GM18951 (cell line): ENCODE measurements at regions of chr12 and their contacts with region 1.

Region 1: DNA sequence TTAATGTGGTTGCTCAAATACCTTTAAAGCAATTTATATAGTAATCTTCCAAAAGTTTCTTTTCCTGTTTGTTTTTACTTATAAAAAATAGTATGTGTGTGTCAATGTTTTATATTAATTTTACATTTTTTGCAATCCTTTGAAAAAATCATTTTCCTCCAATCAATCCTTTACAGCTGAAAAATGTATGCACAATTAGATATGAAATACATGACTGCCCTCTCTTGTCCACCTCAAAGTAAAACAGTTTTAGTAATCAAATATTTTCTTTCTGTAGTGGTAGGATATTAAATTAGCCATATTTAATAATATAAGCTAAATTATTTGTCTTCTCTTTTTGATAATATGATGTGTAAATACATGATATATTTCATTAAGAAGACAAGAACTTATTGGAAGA is 269.9 kb downstream of the ADAMTS20 start:
- POLR2A ChIP-seq: no peak

Region 2: GRCh38 chr12:42469355-42470175 is 812.5 kb before region 1 on chr12:
- in situ Hi-C with region 1: loop called (anchors 25 kb)
- POLR2A ChIP-seq: peak; percentile 36

Region 3: DNA sequence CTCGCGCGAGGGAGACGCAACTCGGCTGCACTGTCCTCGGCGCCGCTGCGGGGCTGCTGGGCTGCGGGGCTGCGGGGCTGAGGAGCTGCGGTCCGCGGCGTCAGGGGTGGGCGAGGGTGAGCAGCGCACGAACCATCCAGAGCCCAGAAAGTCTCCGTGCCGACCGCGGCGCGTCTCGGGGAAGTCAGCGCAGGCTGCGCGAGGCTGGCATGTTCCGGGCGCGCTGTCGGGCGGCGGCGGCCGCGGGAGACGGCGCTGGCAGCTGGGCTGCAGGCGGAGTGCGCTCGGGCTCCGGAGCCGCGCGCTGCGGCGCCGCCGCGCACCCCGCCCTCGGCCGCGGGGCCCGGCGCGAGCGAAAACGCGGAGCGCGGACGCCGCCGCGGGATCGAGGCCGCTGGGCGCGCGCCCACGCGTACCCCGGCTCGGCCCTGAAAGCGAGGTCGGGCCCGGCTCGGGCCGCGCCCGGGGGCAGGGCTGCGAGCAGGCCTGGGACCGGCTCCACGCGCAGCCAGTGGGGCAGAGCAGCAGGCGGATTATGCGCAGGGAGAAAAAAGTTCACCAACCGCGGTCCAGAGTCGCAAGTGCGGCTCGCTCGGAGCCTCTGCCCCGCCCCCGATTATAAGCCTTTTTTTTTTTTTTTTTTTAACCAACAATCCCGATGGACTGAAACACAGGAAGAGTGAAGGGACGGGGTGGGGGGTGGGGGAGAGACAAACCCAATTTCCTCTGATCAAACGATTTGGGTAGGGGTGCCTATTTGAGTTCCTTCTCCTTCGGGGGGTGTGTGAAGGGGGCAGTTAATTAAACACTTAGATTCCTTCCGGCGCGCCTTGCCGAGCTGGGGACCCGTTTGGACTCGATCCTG is 692.4 kb before region 1 on chr12 and contains the start of gene PRICKLE1:
- in situ Hi-C with region 1: loop called (anchors 25 kb)
- POLR2A ChIP-seq: no peak